ENCODE measurements at regions of chr14 and their contacts with region 1.

Region 1: GRCh38 chr14:50116181-50116956 is at the start of gene VCPKMT:
- DNase-seq: peak; percentile 88
- H3K4me3 ChIP-seq: peak within 1 kb of the TSS; percentile 86 to 97 (median 87)
- H3K27ac ChIP-seq: peak within 1 kb of the TSS; percentile 91
- H3K4me1 ChIP-seq: peaks cover 10% of the 10 kb centered on the region
- H3K27me3 ChIP-seq: no peaks in the 10 kb centered on the region
- CTCF ChIP-seq: no peak
- total RNA-seq, gene VCPKMT: 7.5 to 8.1 TPM

Region 2: GRCh38 chr14:50231475-50232275 is 115.3 kb after region 1 on chr14 and contains the start of gene SOS2:
- CTCF ChIA-PET with region 1: no interaction called
- dilution Hi-C with region 1: no loop called
- in situ Hi-C with region 1: no loop called
- intact Hi-C with region 1: loop called (anchors 10 kb)
- DNase-seq: peak; percentile 86
- H3K4me3 ChIP-seq: peak within 1 kb of the TSS; percentile 86 to 93 (median 91)
- H3K27ac ChIP-seq: peak within 1 kb of the TSS; percentile 83
- H3K4me1 ChIP-seq: peaks cover 8% of the 10 kb centered on the region
- H3K27me3 ChIP-seq: no peaks in the 10 kb centered on the region
- CTCF ChIP-seq: peak in 1 of 2 donors; percentile 10
- total RNA-seq, gene SOS2: 19.6 to 35.2 TPM

Region 3: DNA sequence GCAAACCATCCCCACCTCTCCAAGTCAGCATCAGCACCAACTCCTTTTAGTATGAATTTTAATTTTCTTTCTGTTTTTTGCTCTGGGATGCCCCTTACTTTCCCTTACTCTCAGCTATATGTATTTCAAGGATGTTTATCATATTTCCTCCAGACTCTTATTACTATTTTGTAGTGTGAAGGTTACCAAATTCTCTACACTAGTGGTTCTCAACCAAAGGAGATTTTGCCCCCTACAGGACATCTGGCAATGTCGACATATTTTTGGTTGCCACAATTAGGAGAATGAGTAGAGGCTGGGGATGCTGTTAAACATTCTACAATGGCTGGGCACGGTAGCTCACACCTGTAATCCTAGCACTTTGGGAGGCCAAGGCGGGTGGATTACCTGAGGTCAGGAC is 144.1 kb after region 1 on chr14:
- CTCF ChIA-PET with region 1: interaction called, 5 read pairs
- dilution Hi-C with region 1: no loop called
- in situ Hi-C with region 1: no loop called
- intact Hi-C with region 1: loop called (anchors 2 kb)
- DNase-seq: peak; percentile 22
- H3K4me3 ChIP-seq: no peak overlapping the region
- H3K27ac ChIP-seq: no peak overlapping the region
- H3K4me1 ChIP-seq: no peaks in the 10 kb centered on the region
- H3K27me3 ChIP-seq: no peaks in the 10 kb centered on the region
- CTCF ChIP-seq: peak; percentile 42 to 54

Region 4: GRCh38 chr14:50311975-50312733 is 195.8 kb after region 1 on chr14 and contains the starts of genes DMAC2L and L2HGDH:
- CTCF ChIA-PET with region 1: no interaction called
- dilution Hi-C with region 1: no loop called
- in situ Hi-C with region 1: no loop called
- intact Hi-C with region 1: no loop called
- DNase-seq: peak; percentile 95
- H3K4me3 ChIP-seq: peak within 1 kb of the TSS; percentile 89 to 99 (median 96)
- H3K27ac ChIP-seq: peak within 1 kb of the TSS; percentile 86
- H3K4me1 ChIP-seq: peaks cover 9% of the 10 kb centered on the region
- H3K27me3 ChIP-seq: no peaks in the 10 kb centered on the region
- CTCF ChIP-seq: no peak
- total RNA-seq, gene DMAC2L: 8.7 to 12.9 TPM
- total RNA-seq, gene L2HGDH: 5.2 to 9.4 TPM